ENCODE measurements at regions of chr16 and their contacts with region 1.

Region 1: GRCh38 chr16:22206013-22206841 is at the start of gene EEF2K:
- DNase-seq: peak; percentile 93
- ATAC-seq: peak; percentile 89
- H3K4me3 ChIP-seq: peak within 1 kb of the TSS; percentile 89 to 97 (median 93)
- H3K27ac ChIP-seq: peak within 1 kb of the TSS; percentile 71
- H3K4me1 ChIP-seq: peaks cover 78% of the 10 kb centered on the region
- H3K27me3 ChIP-seq: no peaks in the 10 kb centered on the region; a peak in 1 of 5 replicates
- CTCF ChIP-seq: peak; percentile 96
- EP300 ChIP-seq: peak; percentile 38 to 49; a peak in 1 of 4 replicates
- POLR2A ChIP-seq: peak; percentile 69 to 92
- RAD21 ChIP-seq: peak; percentile 96
- total RNA-seq, gene EEF2K: 14.3 and 23.8 TPM in 2 replicates

Region 2: DNA sequence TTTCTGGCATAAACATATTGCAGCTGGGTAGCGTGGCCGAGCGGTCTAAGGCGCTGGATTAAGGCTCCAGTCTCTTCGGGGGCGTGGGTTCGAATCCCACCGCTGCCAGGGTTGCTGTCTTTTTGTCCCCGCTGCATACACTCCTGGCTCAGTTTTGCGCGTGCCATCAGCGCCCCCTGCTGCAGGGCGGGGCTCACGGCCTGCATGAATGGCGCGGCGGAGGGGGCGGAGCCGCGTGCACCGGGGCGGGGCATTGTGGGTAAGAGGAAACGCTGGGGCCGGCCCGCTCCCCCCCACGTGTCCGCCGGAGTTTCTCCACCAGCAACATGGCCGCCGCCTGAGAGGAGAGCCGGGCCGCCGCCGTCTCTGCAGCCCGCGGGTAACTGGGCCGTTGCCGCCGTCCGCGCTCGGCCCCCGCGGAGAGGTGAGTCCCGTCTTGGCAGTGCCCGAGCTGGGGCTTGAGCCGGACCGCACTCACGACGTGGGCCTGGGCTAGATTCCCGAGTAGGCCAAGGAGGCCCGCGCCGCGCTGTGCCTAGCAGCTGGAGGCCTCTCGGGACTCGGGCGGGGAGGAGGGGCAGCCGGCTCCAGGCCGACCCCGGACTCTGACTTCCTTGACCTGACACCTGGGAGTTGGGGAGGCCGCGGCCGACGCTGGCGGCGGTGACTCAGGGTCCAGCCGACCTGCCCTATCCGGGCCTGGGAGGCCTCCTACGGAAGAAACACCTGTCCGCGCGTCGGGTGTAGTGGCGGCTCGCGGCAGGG is 91.1 kb after region 1 on chr16 and contains the start of gene POLR3E:
- CTCF ChIA-PET with region 1: interaction called, 14 read pairs
- POLR2A ChIA-PET with region 1: interaction called, 28 read pairs
- in situ Hi-C with region 1: no loop called
- intact Hi-C with region 1: loop called (anchors 1 kb)
- DNase-seq: peak; percentile 99
- ATAC-seq: peak; percentile 85
- H3K4me3 ChIP-seq: peak within 1 kb of the TSS; percentile 83 to 96 (median 94)
- H3K27ac ChIP-seq: peak within 1 kb of the TSS; percentile 92
- H3K4me1 ChIP-seq: peaks cover 51% of the 10 kb centered on the region
- H3K27me3 ChIP-seq: no peaks in the 10 kb centered on the region; a peak in 1 of 5 replicates
- CTCF ChIP-seq: peak; percentile 99
- EP300 ChIP-seq: peak; percentile 40 to 87; a peak in 3 of 4 replicates
- POLR2A ChIP-seq: peak; percentile 71 to 92
- RAD21 ChIP-seq: peak; percentile 100
- total RNA-seq, gene POLR3E: 94.8 and 135 TPM in 2 replicates